MCF 10A (cell line): ENCODE measurements at regions of chr6 and their contacts with region 1.

Region 1: GRCh38 chr6:137873273-137873762 is 6.3 kb downstream of the TNFAIP3 start:
- DNase-seq: peak; percentile 97
- H3K4me3 Mint-ChIP-seq: peak overlapping the region; percentile 72
- H3K27ac Mint-ChIP-seq: peak overlapping the region; percentile 78
- H3K4me1 Mint-ChIP-seq: peaks cover 15% of the 10 kb centered on the region
- H3K27me3 Mint-ChIP-seq: no peaks in the 10 kb centered on the region
- CTCF ChIP-seq: no peak

Region 2: DNA sequence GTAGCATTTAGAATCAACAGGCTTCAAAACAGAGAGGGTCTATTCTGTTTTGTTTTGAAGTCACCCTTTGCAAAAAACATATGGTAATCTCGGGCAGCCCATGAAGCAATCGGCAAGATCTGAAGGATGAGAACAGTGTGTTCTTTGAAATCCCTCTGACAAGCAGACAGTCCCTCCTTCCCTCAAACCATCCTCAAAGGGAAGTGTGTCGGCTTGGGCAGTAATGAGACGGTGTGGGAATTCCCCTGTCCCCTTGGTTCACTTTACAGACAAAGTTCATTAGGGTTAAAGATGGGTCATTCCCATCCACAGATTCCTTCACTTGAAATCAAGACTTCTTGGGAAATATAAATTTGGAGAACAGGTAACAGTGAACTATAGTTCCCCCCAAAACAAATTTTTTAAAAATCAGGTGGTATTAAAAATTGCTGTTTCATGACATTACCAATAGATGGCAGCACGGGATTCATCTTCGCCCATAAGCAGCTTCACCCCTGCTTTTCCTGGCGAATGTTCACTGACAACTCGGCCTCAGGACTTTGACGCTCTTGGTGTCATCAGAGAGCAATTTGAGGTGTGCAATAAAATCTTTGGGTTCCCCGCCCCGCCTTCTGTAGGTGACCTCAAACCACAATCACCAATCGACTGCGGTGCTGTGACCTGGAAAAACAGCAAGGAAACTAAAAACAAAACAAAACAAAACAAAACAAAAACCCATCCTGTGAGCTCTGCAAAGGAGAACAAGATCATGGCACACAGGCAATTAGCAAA is 165.5 kb before region 1 on chr6:
- CTCF ChIA-PET with region 1: interaction called, 14 read pairs
- POLR2A ChIA-PET with region 1: interaction called, 20 read pairs
- intact Hi-C with region 1: no loop called
- DNase-seq: peak; percentile 88
- H3K4me3 Mint-ChIP-seq: peak overlapping the region; percentile 60
- H3K27ac Mint-ChIP-seq: peak overlapping the region; percentile 67
- H3K4me1 Mint-ChIP-seq: peaks cover 14% of the 10 kb centered on the region
- H3K27me3 Mint-ChIP-seq: no peaks in the 10 kb centered on the region
- CTCF ChIP-seq: peak; percentile 64

Region 3: DNA sequence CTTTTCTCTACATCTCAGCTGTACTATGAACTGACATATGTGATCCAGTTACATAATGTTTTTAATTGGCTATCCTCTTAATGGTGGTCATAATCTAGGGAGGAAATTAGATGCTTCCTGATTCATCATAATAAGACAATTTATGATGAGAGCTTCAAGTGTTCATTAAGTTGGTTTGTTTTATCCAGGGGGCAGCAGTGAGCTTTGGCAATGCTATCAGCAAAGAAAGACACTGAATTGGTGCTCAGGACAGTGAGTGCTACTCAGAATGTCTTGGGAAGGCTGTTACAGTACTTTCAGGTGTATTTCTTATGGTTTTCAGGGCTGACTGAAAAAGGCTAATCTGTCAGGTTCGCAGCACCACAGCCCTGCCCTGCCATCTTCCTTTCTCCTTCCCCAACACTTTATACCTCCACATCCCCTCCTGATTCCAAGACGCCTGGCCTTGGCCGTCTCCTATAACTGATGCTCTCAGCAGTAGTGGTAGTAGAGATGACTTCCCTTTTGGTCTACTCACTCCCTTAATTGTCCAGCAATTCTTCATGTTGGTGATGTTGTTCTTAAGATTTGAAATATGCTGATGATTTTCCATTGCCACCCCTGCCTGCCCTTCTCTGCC is 73.3 kb before region 1 on chr6:
- CTCF ChIA-PET with region 1: interaction called, 23 read pairs
- POLR2A ChIA-PET with region 1: interaction called, 13 read pairs
- intact Hi-C with region 1: loop called (anchors 1 kb)
- DNase-seq: peak; percentile 84
- H3K4me3 Mint-ChIP-seq: no peak overlapping the region
- H3K27ac Mint-ChIP-seq: no peak overlapping the region
- H3K4me1 Mint-ChIP-seq: peaks cover 30% of the 10 kb centered on the region
- H3K27me3 Mint-ChIP-seq: no peaks in the 10 kb centered on the region
- CTCF ChIP-seq: peak; percentile 56

Region 4: DNA sequence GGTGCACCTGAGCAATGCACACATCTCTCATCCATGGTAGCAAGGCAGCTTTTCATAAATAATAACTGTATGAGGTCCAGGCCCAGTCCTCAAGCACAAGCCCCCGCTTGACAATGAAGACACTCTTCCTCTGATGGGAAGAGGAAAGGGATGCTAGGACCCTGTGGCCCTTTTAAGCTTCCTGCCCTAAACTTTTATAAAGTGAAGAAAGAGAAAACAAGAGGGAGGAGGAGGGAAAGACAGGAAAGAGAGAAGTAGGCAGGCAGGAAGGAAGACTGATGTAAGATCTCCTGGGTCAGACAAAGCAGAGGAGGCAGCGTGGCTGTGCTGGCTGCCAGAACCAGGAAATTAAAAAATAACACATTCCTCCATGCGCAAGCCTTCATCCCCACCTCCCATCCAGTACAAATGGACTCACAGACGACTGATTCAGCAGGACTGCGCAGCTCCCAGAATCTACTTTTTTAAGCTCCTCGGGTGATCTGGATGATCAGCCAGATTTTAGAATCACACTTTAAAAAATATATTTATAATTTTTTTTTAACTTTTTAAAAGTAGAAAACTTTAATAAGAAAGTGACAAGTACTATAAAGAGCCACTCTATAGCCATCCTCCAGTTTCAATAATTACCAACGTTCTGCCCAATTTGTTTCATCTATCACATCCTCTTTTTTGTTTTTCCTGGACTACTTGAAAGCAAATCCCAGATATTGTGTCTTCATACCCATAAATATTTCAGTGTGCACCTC is 10.3 kb after region 1 on chr6:
- CTCF ChIA-PET with region 1: interaction called, 7 read pairs
- POLR2A ChIA-PET with region 1: interaction called, 13 read pairs
- intact Hi-C with region 1: no loop called
- DNase-seq: no peak
- H3K4me3 Mint-ChIP-seq: no peak overlapping the region
- H3K27ac Mint-ChIP-seq: peak overlapping the region; percentile 76
- H3K4me1 Mint-ChIP-seq: no peaks in the 10 kb centered on the region
- H3K27me3 Mint-ChIP-seq: no peaks in the 10 kb centered on the region
- CTCF ChIP-seq: no peak

Region 5: GRCh38 chr6:137938770-137939379 is 65.6 kb after region 1 on chr6:
- CTCF ChIA-PET with region 1: interaction called, 112 read pairs
- POLR2A ChIA-PET with region 1: interaction called, 90 read pairs
- intact Hi-C with region 1: no loop called
- DNase-seq: no peak
- H3K4me3 Mint-ChIP-seq: no peak overlapping the region
- H3K27ac Mint-ChIP-seq: no peak overlapping the region
- H3K4me1 Mint-ChIP-seq: peaks cover 11% of the 10 kb centered on the region
- H3K27me3 Mint-ChIP-seq: no peaks in the 10 kb centered on the region
- CTCF ChIP-seq: no peak

Region 6: DNA sequence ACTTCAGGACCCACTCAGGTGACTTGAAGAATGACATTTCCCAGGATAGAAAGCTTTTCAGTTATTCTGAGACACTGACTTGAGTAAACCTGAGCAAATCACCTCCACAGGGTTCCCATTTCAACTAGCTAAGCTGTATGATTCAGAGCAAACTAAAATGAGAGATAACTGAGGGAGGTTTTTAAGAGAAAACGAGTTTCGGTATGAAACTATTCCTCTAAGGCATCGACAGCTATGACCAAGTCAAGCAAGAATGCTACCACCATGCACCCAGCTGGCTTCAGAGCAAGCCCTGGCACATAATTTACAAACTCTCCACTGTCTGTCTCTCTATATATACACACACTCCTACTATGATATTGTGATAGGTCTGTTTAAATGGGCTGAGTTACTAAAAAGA is 158.5 kb after region 1 on chr6:
- CTCF ChIA-PET with region 1: no interaction called
- POLR2A ChIA-PET with region 1: interaction called, 25 read pairs
- intact Hi-C with region 1: no loop called
- DNase-seq: peak; percentile 62
- H3K4me3 Mint-ChIP-seq: peak overlapping the region; percentile 55
- H3K27ac Mint-ChIP-seq: peak overlapping the region; percentile 91
- H3K4me1 Mint-ChIP-seq: peaks cover 62% of the 10 kb centered on the region
- H3K27me3 Mint-ChIP-seq: no peaks in the 10 kb centered on the region
- CTCF ChIP-seq: no peak